Activated CD4-positive, alpha-beta memory T cell treated with anti-CD3 and anti-CD28 coated beads, Interleukin-2, amount 10 ng/mL, durations not matched to agents 7 days and 5 days (primary cell): ENCODE measurements at regions of chr1 and their contacts with region 1.

Region 1: GRCh38 chr1:46616277-46617107 is at the start of gene MOB3C:
- DNase-seq: peak; percentile 71
- H3K4me3 Mint-ChIP-seq: peak within 1 kb of the TSS; percentile 88
- H3K27ac Mint-ChIP-seq: peak within 1 kb of the TSS; percentile 75
- H3K4me1 Mint-ChIP-seq: peaks cover 70% of the 10 kb centered on the region
- H3K27me3 Mint-ChIP-seq: no peaks in the 10 kb centered on the region
- total RNA-seq, gene MOB3C: 23.2 to 23.8 TPM

Region 2: GRCh38 chr1:46581681-46582455 is 34.6 kb before region 1 on chr1:
- CTCF ChIA-PET with region 1: interaction called, 6 read pairs
- POLR2A ChIA-PET with region 1: interaction called, 202 read pairs
- DNase-seq: peak; percentile 54
- H3K4me3 Mint-ChIP-seq: peak overlapping the region; percentile 62
- H3K27ac Mint-ChIP-seq: peak overlapping the region; percentile 99
- H3K4me1 Mint-ChIP-seq: peaks cover 56% of the 10 kb centered on the region
- H3K27me3 Mint-ChIP-seq: no peaks in the 10 kb centered on the region

Region 3: DNA sequence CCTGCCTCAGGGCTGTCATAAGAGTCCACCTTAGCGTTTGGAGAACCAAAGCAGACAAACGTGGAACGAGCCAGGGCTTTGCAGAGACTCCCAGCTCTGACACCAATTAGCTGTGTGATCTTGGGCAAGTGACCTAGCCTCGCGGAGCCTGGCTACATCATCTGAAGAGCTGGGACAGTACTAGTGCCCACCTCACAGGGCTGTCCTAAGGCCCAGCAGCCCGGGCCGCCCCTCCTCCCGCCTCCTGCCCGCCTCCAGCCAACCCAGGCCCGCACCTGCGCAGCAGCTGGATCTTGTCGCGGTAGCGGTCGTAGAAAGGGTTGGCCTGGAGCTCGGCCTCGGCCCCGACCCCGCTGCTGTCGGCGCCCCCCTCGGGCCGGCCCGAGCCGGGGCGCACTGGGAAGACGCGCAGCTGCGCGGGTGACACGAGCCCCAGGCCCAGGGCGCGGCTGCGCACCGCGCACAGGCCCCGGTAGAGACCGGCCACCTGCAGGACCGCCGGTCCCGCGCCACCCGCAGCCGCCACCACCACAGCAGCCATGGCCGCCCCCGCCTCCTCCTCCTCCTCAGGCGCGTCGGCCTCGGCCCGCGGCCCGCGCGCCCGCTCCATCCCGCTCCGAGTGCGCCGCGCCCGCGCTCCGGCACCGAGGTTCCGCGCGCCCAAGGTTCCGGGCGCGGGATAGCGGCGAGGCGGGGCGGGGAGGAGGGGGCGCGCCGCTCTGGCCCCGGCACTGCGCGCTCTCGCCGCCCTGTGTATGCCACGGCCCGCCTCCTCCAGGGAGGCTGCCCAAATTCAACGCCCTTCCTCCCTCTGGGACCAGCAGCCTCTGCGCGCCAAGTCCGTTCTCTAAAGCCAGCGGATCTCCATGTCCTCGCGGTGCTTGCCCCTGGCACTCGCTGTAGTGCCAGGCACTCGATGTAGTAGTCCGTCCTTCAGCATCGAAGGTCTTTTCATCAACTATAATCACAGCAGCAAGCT is 51.6 kb after region 1 on chr1 and contains the start of gene ATPAF1:
- CTCF ChIA-PET with region 1: interaction called, 3 read pairs
- POLR2A ChIA-PET with region 1: interaction called, 15 read pairs
- DNase-seq: peak; percentile 77
- H3K4me3 Mint-ChIP-seq: no peak within 1 kb of the TSS
- H3K27ac Mint-ChIP-seq: peak within 1 kb of the TSS; percentile 47
- H3K4me1 Mint-ChIP-seq: peaks cover 18% of the 10 kb centered on the region
- H3K27me3 Mint-ChIP-seq: no peaks in the 10 kb centered on the region
- total RNA-seq, gene ATPAF1: 51.1 to 51.2 TPM

Region 4: GRCh38 chr1:46772571-46772970 is 156.1 kb after region 1 on chr1:
- CTCF ChIA-PET with region 1: no interaction called
- POLR2A ChIA-PET with region 1: no interaction called
- DNase-seq: no peak
- H3K4me3 Mint-ChIP-seq: no peak overlapping the region
- H3K27ac Mint-ChIP-seq: no peak overlapping the region
- H3K4me1 Mint-ChIP-seq: peaks cover 3% of the 10 kb centered on the region
- H3K27me3 Mint-ChIP-seq: peaks cover 2% of the 10 kb centered on the region